Activated CD4-positive, alpha-beta memory T cell treated with anti-CD3 and anti-CD28 coated beads, Interleukin-2, amount 10 ng/mL, durations not matched to agents 7 days and 5 days (primary cell): ENCODE measurements at regions of chr1 and their contacts with region 1.

Region 1: GRCh38 chr1:8970870-8971337 is 25.2 kb downstream of the CA6 start:
- DNase-seq: peak; percentile 57
- H3K4me3 Mint-ChIP-seq: peak overlapping the region; percentile 98
- H3K27ac Mint-ChIP-seq: peak overlapping the region; percentile 99
- H3K4me1 Mint-ChIP-seq: peaks cover 56% of the 10 kb centered on the region
- H3K27me3 Mint-ChIP-seq: no peaks in the 10 kb centered on the region

Region 2: DNA sequence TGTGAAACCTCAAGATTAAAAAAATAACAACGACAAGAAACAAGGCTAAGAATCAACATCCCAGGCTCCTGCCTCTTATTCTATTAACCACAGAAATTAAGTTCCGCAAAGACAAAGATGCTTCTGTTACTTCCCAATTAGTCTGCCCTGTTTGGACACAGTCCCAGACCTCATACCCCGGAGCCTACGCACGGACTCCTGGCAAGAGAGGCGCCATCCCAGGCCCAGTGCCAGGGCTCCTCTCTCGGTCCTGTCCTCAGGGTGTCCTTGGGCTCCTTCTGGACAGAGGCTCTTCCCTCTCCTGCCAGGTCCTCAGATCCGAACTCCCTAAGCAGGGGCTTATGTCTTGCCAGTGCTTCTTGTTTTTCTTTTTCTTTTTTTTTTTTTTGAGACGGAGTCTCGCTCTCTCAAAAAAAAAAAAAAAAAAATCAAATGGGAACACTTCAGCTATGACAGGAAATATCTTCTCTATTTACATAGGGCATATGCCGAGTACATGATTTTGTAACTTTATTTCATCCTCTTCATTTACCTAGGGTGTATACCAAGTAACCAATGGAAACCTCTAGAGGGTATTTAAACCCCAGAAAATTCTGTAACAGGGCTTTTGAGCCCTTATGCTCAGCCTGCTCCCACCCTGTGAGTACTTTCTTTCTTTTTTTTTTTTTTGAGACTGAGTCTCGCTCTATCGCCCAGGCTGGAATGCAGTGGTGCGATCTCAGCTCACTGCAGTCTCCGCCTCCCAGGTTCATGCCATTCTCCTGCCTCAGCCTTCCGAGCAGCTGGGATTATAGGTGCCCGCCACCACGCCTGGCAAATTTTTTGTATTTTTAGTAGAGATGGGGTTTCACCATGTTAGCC is 80.7 kb before region 1 on chr1:
- CTCF ChIA-PET with region 1: no interaction called
- POLR2A ChIA-PET with region 1: no interaction called
- DNase-seq: no peak
- H3K4me3 Mint-ChIP-seq: no peak overlapping the region
- H3K27ac Mint-ChIP-seq: no peak overlapping the region
- H3K4me1 Mint-ChIP-seq: peaks cover 8% of the 10 kb centered on the region
- H3K27me3 Mint-ChIP-seq: peaks cover 4% of the 10 kb centered on the region

Region 3: GRCh38 chr1:8947127-8947691 is 23.7 kb before region 1 on chr1:
- CTCF ChIA-PET with region 1: interaction called, 25 read pairs
- POLR2A ChIA-PET with region 1: interaction called, 22 read pairs
- DNase-seq: peak; percentile 37
- H3K4me3 Mint-ChIP-seq: no peak overlapping the region
- H3K27ac Mint-ChIP-seq: peak overlapping the region; percentile 99
- H3K4me1 Mint-ChIP-seq: peaks cover 84% of the 10 kb centered on the region
- H3K27me3 Mint-ChIP-seq: no peaks in the 10 kb centered on the region